Dendritic cell treated with granulocyte-macrophage colony-stimulating factor and Interleukin-4, amounts not matched to agents 40 ng/mL and 50 ng/mL, for 4 days (primary cell): ENCODE measurements at regions of chr10 and their contacts with region 1.

Region 1: GRCh38 chr10:13299437-13300287 is at the start of gene PHYH:
- H3K4me3 Mint-ChIP-seq: peak within 1 kb of the TSS; percentile 78
- H3K27ac Mint-ChIP-seq: peak within 1 kb of the TSS; percentile 88
- H3K4me1 Mint-ChIP-seq: peaks cover 22% of the 10 kb centered on the region
- H3K27me3 Mint-ChIP-seq: no peaks in the 10 kb centered on the region

Region 2: GRCh38 chr10:13115832-13116803 is 183.5 kb before region 1 on chr10:
- intact Hi-C with region 1: loop called (anchors 5 kb)
- H3K4me3 Mint-ChIP-seq: no peak overlapping the region
- H3K27ac Mint-ChIP-seq: no peak overlapping the region
- H3K4me1 Mint-ChIP-seq: peaks cover 27% of the 10 kb centered on the region
- H3K27me3 Mint-ChIP-seq: peaks cover 76% of the 10 kb centered on the region

Region 3: DNA sequence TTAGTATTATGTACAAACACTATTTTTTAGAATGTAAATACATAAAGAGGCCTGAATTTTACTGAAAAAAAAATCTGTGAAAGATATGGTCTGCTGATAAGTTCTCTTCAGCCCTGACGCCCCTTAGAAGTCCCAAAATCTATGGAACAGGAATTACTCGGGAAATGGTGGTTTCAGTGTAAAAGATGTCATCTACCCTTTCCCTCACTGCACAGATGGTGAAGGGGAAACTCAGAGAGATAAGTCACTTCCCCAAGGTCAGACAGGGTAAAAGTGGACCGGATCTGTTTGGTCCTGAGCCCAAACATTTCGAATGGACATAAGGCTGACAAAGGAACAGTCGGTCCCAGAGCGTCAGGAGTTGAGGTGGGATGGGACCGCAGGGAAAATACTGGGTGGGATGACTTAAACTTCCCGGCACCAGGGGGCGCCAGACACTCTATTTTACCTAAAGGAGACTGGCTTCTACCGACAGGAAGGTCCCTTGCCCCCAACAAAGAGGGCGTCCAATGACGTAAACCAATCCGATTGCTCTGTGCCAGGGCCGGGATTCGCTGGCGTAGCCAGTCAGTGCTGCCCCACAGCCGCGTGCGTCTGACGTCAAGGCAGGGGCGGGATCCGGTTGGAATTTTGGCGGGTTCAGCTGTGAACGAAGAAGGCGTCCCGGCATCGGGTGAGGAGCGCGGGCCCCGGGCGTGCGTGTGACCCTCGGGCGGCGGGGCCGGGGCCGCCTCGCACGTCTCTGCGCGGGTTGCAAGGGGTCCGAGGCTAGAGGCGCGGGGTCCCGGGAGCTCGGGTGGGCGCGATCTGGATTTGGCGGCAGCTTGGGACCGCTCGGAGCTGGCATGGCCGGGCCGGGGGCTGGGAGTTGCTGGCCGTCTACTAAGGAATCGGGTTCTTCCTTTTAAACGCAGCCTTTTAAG is 138.5 kb before region 1 on chr10 and contains the start of gene MCM10:
- intact Hi-C with region 1: loop called (anchors 1 kb)
- H3K4me3 Mint-ChIP-seq: peak within 1 kb of the TSS; percentile 74
- H3K27ac Mint-ChIP-seq: peak within 1 kb of the TSS; percentile 61
- H3K4me1 Mint-ChIP-seq: peaks cover 15% of the 10 kb centered on the region
- H3K27me3 Mint-ChIP-seq: peaks cover 7% of the 10 kb centered on the region

Region 4: GRCh38 chr10:13348216-13349017 is 48.8 kb after region 1 on chr10 and contains the start of gene SEPHS1:
- intact Hi-C with region 1: loop called (anchors 1 kb)
- H3K4me3 Mint-ChIP-seq: peak within 1 kb of the TSS; percentile 82
- H3K27ac Mint-ChIP-seq: peak within 1 kb of the TSS; percentile 80
- H3K4me1 Mint-ChIP-seq: peaks cover 37% of the 10 kb centered on the region
- H3K27me3 Mint-ChIP-seq: peaks cover 28% of the 10 kb centered on the region

Region 5: GRCh38 chr10:13440185-13441061 is 140.8 kb after region 1 on chr10:
- intact Hi-C with region 1: no loop called
- H3K4me3 Mint-ChIP-seq: peak overlapping the region; percentile 44
- H3K27ac Mint-ChIP-seq: no peak overlapping the region
- H3K4me1 Mint-ChIP-seq: peaks cover 10% of the 10 kb centered on the region
- H3K27me3 Mint-ChIP-seq: peaks cover 46% of the 10 kb centered on the region